A549 (cell line): ENCODE measurements at regions of chr16 and their contacts with region 1.

Region 1: DNA sequence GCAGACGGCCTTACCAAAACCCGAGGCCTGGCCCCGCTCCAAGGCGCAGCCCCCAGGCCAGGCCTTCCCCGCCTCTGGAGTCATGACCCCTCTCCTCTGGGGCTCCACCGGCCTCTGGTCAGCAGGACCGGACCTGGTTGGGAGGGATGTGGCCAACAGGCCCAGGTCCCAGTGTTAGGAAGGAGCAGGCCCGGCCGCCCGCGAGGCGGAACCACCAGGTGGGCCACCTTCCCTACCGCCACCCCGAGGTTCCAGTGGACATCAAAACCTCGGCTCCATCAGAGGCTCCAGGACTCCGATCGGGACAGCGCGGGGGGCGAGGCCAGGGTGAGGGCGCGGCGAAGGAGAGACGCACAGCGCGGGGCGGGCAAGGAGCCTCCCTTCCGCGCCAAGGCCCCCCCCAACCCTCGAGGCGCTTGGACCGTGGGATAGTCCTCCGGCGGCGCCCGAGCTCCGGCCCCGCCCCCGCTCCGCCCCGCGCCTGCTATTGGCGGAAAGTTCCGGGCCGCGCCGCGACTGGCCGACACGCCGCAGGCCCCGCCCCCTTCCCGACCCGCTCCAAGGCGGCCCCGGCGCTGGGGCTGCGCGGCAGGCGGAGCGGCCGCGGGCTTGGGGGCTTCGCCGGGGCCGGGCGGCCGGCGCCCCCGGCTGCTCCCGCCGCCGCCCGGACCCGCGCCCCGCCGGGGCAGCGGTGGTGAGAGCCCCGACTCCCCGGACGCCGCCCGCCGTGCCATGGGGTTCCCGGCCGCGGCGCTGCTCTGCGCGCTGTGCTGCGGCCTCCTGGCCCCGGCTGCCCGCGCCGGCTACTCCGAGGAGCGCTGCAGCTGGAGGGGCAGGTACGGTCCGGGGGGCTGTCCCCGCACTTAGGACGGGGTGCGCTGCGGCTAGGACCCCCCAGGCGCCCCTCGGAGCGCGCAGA is at the start of gene METRN:
- DNase-seq: peak; percentile 83 to 90
- ATAC-seq: peak; percentile 37 to 61
- H3K4me3 ChIP-seq: peak within 1 kb of the TSS; percentile 64
- H3K27ac ChIP-seq: peak within 1 kb of the TSS; percentile 80 to 99
- H3K4me1 ChIP-seq: peaks cover 84% of the 10 kb centered on the region
- CTCF ChIP-seq: no peak
- EP300 ChIP-seq: no peak
- POLR2A ChIP-seq: peak; percentile 28; the same call in 1 of the 2 replicates
- RAD21 ChIP-seq: no peak
- polyA plus RNA-seq, gene METRN: 33.8 and 41.0 TPM in 2 replicates

Region 2: GRCh38 chr16:684067-684794 is 30.6 kb before region 1 on chr16 and contains the start of gene JMJD8:
- CTCF ChIA-PET with region 1: interaction called, 11 read pairs
- POLR2A ChIA-PET with region 1: interaction called, 6 read pairs
- DNase-seq: peak; percentile 90 to 97
- ATAC-seq: peak; percentile 61 to 77
- H3K4me3 ChIP-seq: peak within 1 kb of the TSS; percentile 76
- H3K27ac ChIP-seq: peak within 1 kb of the TSS; percentile 91 to 93
- H3K4me1 ChIP-seq: peaks cover 34% of the 10 kb centered on the region
- CTCF ChIP-seq: no peak
- EP300 ChIP-seq: no peak
- POLR2A ChIP-seq: peak; percentile 88
- RAD21 ChIP-seq: no peak
- polyA plus RNA-seq, gene JMJD8: 37.5 and 43.8 TPM in 2 replicates

Region 3: GRCh38 chr16:695355-696089 is 19.3 kb before region 1 on chr16:
- CTCF ChIA-PET with region 1: interaction called, 33 read pairs
- POLR2A ChIA-PET with region 1: interaction called, 4 read pairs
- DNase-seq: peak in 1 of 2 experiments; percentile 78
- ATAC-seq: peak; percentile 38 to 61
- H3K4me3 ChIP-seq: peak overlapping the region; percentile 37
- H3K27ac ChIP-seq: peak overlapping the region; percentile 51 to 76; a peak in 5 of 6 replicates
- H3K4me1 ChIP-seq: peaks cover 22% of the 10 kb centered on the region; the same call in 2 of the 3 replicates
- CTCF ChIP-seq: no peak
- EP300 ChIP-seq: no peak
- POLR2A ChIP-seq: peak; percentile 42; the same call in 1 of the 2 replicates
- RAD21 ChIP-seq: no peak

Region 4: DNA sequence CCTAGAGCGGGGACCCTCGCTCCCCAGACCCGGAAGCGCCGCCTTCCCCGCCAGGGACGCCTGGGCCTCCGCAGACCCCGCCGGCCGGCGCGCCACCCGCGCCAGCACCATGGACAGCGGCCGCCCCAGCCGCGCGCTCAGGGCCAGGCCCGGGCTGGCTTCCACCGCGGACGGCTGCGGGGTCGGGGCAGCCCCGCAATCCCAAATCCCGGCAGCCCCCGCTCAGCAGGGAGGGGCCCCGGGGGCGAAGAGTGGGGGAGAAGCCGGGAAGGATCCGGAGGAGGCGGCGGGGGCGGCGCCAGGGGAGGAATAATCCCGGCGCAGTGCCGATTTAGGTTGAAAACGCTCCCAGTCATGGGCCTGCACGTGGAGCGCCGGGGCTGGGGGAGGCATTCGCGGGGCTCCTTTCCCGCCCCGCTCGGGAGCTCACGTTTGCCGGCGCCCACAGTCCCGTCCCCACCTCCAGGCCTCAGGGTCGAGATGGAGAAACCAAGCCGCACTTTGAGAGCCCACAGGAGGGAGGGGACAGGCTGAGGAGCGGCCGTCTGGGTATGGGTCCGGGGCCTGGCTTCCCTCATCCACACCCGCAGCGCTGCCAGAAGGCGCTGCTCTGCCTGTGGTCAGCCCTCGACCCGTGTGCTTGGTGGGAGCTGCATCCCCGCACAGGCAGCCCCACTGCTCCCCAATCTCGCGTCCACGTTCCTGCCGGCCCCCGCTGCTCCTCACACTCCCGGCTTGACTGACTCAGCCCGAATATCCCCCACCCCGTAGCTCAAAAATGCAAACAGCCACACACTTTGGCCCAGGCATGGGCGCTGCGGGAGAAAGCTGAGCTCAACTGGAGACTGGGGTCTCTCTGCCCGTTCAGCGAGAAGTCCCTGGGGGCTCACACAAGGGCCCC is 13.9 kb before region 1 on chr16:
- CTCF ChIA-PET with region 1: interaction called, 656 read pairs
- POLR2A ChIA-PET with region 1: no interaction called
- DNase-seq: no peak
- ATAC-seq: peak; percentile 36 to 64; a peak in 4 of 6 replicates
- H3K4me3 ChIP-seq: peak overlapping the region; percentile 21; the same call in 1 of the 3 replicates
- H3K27ac ChIP-seq: no peak overlapping the region
- H3K4me1 ChIP-seq: peaks cover 19% of the 10 kb centered on the region
- CTCF ChIP-seq: no peak
- EP300 ChIP-seq: no peak
- POLR2A ChIP-seq: no peak
- RAD21 ChIP-seq: no peak

Region 5: GRCh38 chr16:728131-728889 is 13.5 kb after region 1 on chr16:
- CTCF ChIA-PET with region 1: interaction called, 656 read pairs
- POLR2A ChIA-PET with region 1: interaction called, 23 read pairs
- DNase-seq: peak; percentile 63 to 88
- ATAC-seq: peak; percentile 15 to 61
- H3K4me3 ChIP-seq: peak overlapping the region; percentile 60
- H3K27ac ChIP-seq: peak overlapping the region; percentile 89 to 91
- H3K4me1 ChIP-seq: peaks cover 13% of the 10 kb centered on the region
- CTCF ChIP-seq: no peak
- EP300 ChIP-seq: no peak
- POLR2A ChIP-seq: no peak; the same call in 1 of the 2 replicates
- RAD21 ChIP-seq: no peak

Region 6: GRCh38 chr16:754656-755055 is 39.8 kb after region 1 on chr16:
- CTCF ChIA-PET with region 1: interaction called, 13 read pairs
- POLR2A ChIA-PET with region 1: no interaction called
- DNase-seq: no peak
- ATAC-seq: no peak
- H3K4me3 ChIP-seq: no peak overlapping the region
- H3K27ac ChIP-seq: no peak overlapping the region
- H3K4me1 ChIP-seq: no peaks in the 10 kb centered on the region
- CTCF ChIP-seq: no peak
- EP300 ChIP-seq: no peak
- POLR2A ChIP-seq: no peak
- RAD21 ChIP-seq: no peak